B cell (primary cell): ENCODE measurements at regions of chr7 and their contacts with region 1.

Region 1: GRCh38 chr7:104983578-104984539 is 30.1 kb upstream of the KMT2E start:
- DNase-seq: peak; percentile 91
- ATAC-seq: peak; percentile 88
- H3K4me3 ChIP-seq: peak overlapping the region; percentile 48 to 87 (median 80)
- H3K4me3 Mint-ChIP-seq: peak overlapping the region; percentile 99
- H3K27ac ChIP-seq: peak overlapping the region in 1 of 2 donors; percentile 96
- H3K27ac Mint-ChIP-seq: peak overlapping the region; percentile 100
- H3K4me1 ChIP-seq: peaks cover 34 to 45% of the 10 kb centered on the region in 2 donors
- H3K4me1 Mint-ChIP-seq: peaks cover 79% of the 10 kb centered on the region
- H3K27me3 ChIP-seq: no peaks in the 10 kb centered on the region
- H3K27me3 Mint-ChIP-seq: no peaks in the 10 kb centered on the region
- CTCF ChIP-seq: peak; percentile 70

Region 2: DNA sequence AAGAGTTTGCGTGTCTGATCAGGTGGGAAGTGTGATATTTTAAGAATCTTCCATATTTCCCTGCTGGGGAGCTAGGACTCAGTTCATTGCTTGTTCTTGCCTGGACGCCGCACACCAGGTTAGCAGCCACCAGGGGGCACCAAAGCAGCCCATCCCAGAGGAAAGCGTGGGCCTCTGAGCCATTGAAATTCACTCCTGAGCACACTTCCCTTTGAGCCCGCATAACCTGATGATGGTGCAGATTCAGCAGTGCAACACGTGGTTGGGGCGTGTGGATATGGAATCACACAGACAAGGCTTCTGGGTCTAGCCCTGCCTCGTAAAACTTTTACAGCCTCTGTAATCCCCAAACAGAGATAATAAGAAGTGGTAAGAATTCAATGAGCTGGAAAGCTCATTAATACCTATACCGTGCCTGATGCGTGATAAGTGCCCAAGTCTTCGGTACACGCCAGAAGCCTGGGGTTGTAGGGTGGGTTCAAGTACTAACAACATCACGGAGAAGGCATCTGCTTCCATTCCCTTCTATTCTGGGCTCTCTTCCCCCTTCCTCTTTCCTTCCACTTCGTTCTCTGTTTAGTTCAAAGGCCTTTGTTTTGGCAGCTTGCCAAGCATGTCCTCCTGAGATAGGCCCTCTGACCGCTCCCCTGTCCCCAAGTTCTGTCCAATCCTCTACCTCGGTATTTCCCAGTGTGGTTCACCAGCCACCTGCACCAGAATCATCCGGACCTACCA is 100.0 kb before region 1 on chr7:
- CTCF ChIA-PET with region 1: interaction called, 6 read pairs
- POLR2A ChIA-PET with region 1: no interaction called
- intact Hi-C with region 1: loop called (anchors 5 kb)
- DNase-seq: peak; percentile 78
- ATAC-seq: peak; percentile 81
- H3K4me3 ChIP-seq: no peak overlapping the region
- H3K4me3 Mint-ChIP-seq: no peak overlapping the region
- H3K27ac ChIP-seq: no peak overlapping the region
- H3K27ac Mint-ChIP-seq: no peak overlapping the region
- H3K4me1 ChIP-seq: peaks cover 4 to 6% of the 10 kb centered on the region in 2 donors
- H3K4me1 Mint-ChIP-seq: peaks cover 8% of the 10 kb centered on the region
- H3K27me3 ChIP-seq: peaks cover 0 to 9% (median 2%) of the 10 kb centered on the region in 4 experiments
- H3K27me3 Mint-ChIP-seq: peaks cover 12% of the 10 kb centered on the region
- CTCF ChIP-seq: peak; percentile 95

Region 3: DNA sequence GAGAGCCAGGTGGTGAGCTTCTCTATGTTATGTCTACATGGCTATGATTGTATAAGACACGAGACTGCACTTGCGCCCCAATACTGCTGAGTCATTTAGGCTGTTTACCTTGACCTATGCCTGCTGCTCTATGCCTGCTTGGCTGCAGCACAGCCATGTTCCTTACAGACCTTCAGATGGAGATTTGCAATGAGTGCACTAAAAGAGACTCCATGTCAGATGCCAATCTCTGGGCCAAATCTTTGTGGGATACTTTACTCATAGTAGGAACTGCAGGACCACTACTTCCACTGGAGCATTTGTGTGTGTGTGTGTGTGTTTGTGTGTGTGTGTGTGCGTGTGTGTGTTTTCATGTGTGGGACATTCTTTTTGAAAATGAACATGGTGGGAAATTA is 19.9 kb before region 1 on chr7:
- CTCF ChIA-PET with region 1: interaction called, 15 read pairs
- POLR2A ChIA-PET with region 1: no interaction called
- intact Hi-C with region 1: no loop called
- DNase-seq: no peak
- ATAC-seq: no peak
- H3K4me3 ChIP-seq: no peak overlapping the region
- H3K4me3 Mint-ChIP-seq: no peak overlapping the region
- H3K27ac ChIP-seq: no peak overlapping the region
- H3K27ac Mint-ChIP-seq: no peak overlapping the region
- H3K4me1 ChIP-seq: peaks cover 10 to 14% of the 10 kb centered on the region in 2 donors
- H3K4me1 Mint-ChIP-seq: peaks cover 26% of the 10 kb centered on the region
- H3K27me3 ChIP-seq: no peaks in the 10 kb centered on the region
- H3K27me3 Mint-ChIP-seq: no peaks in the 10 kb centered on the region
- CTCF ChIP-seq: no peak

Region 4: GRCh38 chr7:105003275-105003674 is 19.4 kb after region 1 on chr7:
- CTCF ChIA-PET with region 1: interaction called, 282 read pairs
- POLR2A ChIA-PET with region 1: no interaction called
- intact Hi-C with region 1: no loop called
- DNase-seq: no peak
- ATAC-seq: no peak
- H3K4me3 ChIP-seq: no peak overlapping the region
- H3K4me3 Mint-ChIP-seq: peak overlapping the region; percentile 47
- H3K27ac ChIP-seq: peak overlapping the region in 1 of 2 donors; percentile 77
- H3K27ac Mint-ChIP-seq: peak overlapping the region; percentile 76
- H3K4me1 ChIP-seq: peaks cover 44 to 66% of the 10 kb centered on the region in 2 donors
- H3K4me1 Mint-ChIP-seq: peaks cover 77% of the 10 kb centered on the region
- H3K27me3 ChIP-seq: no peaks in the 10 kb centered on the region
- H3K27me3 Mint-ChIP-seq: no peaks in the 10 kb centered on the region
- CTCF ChIP-seq: no peak

Region 5: DNA sequence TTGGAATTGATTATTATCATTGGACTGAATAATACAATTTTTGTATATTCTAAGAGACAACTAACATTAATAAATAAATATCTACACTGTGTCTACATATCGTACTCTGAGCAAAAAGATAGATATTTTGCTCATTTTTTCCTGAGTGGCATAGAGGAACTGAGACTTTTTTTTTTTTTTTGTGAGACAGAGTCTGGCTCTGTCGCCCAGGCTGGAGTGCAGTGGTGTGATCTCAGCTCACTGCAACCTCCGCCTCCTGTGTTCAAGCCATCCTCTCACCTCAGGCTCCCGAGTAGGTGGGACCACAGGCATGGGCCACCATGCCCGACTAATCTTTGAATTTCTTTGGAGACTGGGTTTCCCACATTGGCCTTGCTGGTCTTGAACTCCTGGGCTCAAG is 44.1 kb after region 1 on chr7:
- CTCF ChIA-PET with region 1: interaction called, 28 read pairs
- POLR2A ChIA-PET with region 1: interaction called, 9 read pairs
- intact Hi-C with region 1: no loop called
- DNase-seq: peak; percentile 50
- ATAC-seq: peak; percentile 74
- H3K4me3 ChIP-seq: no peak overlapping the region
- H3K4me3 Mint-ChIP-seq: peak overlapping the region; percentile 64
- H3K27ac ChIP-seq: peak overlapping the region in 1 of 2 donors; percentile 63
- H3K27ac Mint-ChIP-seq: peak overlapping the region; percentile 65
- H3K4me1 ChIP-seq: peaks cover 44 to 69% of the 10 kb centered on the region in 2 donors
- H3K4me1 Mint-ChIP-seq: peaks cover 75% of the 10 kb centered on the region
- H3K27me3 ChIP-seq: no peaks in the 10 kb centered on the region
- H3K27me3 Mint-ChIP-seq: no peaks in the 10 kb centered on the region
- CTCF ChIP-seq: no peak

Region 6: DNA sequence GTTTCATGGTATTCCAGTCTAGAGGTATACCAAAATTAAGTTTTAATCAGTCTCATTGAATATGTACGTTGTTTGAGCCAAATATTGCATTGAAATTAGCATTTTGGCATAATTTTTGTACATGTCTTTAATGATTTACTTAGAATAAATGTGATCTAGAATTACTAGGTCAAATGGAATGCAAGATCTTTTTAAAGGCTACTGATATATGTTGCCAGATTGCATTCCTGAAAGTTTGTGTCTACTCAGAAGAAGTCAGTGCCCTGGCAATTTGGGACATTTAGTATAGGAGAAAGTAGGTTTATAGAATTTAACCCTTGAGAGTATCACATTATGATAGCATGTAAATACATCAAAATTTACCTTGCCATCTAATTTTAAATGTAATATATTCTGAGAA is 62.6 kb after region 1 on chr7:
- CTCF ChIA-PET with region 1: interaction called, 151 read pairs
- POLR2A ChIA-PET with region 1: interaction called, 4 read pairs
- intact Hi-C with region 1: loop called (anchors 1 kb)
- DNase-seq: no peak
- ATAC-seq: no peak
- H3K4me3 ChIP-seq: no peak overlapping the region
- H3K4me3 Mint-ChIP-seq: no peak overlapping the region
- H3K27ac ChIP-seq: no peak overlapping the region
- H3K27ac Mint-ChIP-seq: no peak overlapping the region
- H3K4me1 ChIP-seq: peaks cover 5 to 6% of the 10 kb centered on the region in 2 donors
- H3K4me1 Mint-ChIP-seq: peaks cover 26% of the 10 kb centered on the region
- H3K27me3 ChIP-seq: no peaks in the 10 kb centered on the region
- H3K27me3 Mint-ChIP-seq: no peaks in the 10 kb centered on the region
- CTCF ChIP-seq: no peak

Region 7: DNA sequence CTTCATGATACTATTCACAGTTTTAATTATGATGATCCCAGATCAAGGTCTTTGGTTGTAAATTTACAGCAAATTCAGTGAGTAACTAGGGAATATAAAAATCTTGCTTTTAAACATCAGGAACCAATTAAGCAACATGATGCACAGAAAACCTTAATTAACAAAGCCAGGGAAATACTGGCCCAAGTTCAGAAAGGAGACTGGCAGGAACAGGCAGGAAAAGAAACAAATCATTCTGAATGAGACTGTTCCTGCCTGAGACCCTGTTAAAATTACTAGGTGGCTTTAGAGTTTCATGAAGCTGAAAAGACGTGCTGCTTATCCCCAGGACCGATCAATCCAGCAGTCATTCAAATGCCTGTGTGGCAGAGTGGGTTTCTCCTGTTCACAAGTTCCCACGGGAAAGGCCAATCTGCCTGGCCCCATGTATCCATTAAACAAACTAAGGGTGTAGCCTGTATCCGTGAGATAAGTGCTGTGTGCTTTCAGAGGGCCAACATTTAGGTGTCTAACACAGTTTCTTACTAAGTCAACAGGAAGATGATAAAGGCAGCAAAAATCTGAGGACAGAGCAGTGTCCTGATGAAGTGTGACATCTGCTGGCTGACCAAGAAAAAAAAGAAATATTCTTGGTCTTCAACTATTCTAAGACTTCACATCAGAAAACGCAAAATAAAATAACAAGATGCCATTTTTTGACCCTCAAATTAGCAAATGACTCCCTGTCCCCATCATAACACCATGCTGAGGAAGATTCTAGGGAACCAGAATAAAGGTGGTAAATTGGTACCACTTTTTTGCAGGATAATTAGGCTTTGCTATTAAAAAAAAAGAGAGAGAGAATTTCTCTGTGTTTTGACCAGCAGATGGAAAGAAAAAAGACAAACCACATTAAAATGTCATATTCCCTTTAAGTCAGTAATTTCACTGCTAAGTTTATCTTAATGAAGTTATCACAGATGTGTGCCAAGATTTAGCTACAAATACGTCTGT is 504.0 kb after region 1 on chr7:
- CTCF ChIA-PET with region 1: no interaction called
- POLR2A ChIA-PET with region 1: no interaction called
- intact Hi-C with region 1: loop called (anchors 1 kb)
- DNase-seq: peak; percentile 59
- ATAC-seq: peak; percentile 24
- H3K4me3 ChIP-seq: no peak overlapping the region
- H3K4me3 Mint-ChIP-seq: no peak overlapping the region
- H3K27ac ChIP-seq: no peak overlapping the region
- H3K27ac Mint-ChIP-seq: peak overlapping the region; percentile 61
- H3K4me1 ChIP-seq: peaks cover 0 to 3% of the 10 kb centered on the region in 2 donors
- H3K4me1 Mint-ChIP-seq: peaks cover 5% of the 10 kb centered on the region
- H3K27me3 ChIP-seq: no peaks in the 10 kb centered on the region
- H3K27me3 Mint-ChIP-seq: no peaks in the 10 kb centered on the region
- CTCF ChIP-seq: peak; percentile 75